ENCODE measurements at regions of chr12 and their contacts with region 1.

Region 1: GRCh38 chr12:20601668-20602280 is 93.4 kb upstream of the SLCO1C1 start:
- DNase-seq: peak; percentile 75
- H3K4me3 ChIP-seq: no peak overlapping the region
- H3K27ac ChIP-seq: no peak overlapping the region
- H3K4me1 ChIP-seq: peaks cover 9% of the 10 kb centered on the region
- H3K27me3 ChIP-seq: no peaks in the 10 kb centered on the region
- CTCF ChIP-seq: peak in 1 of 2 donors; percentile 24
- POLR2A ChIP-seq: no peak

Region 2: GRCh38 chr12:20220339-20220738 is 381.4 kb before region 1 on chr12:
- CTCF ChIA-PET with region 1: interaction called, 10 read pairs
- POLR2A ChIA-PET with region 1: no interaction called
- dilution Hi-C with region 1: no loop called
- intact Hi-C with region 1: no loop called
- DNase-seq: peak; percentile 61
- H3K4me3 ChIP-seq: no peak overlapping the region
- H3K27ac ChIP-seq: no peak overlapping the region
- H3K4me1 ChIP-seq: no peaks in the 10 kb centered on the region
- H3K27me3 ChIP-seq: no peaks in the 10 kb centered on the region
- CTCF ChIP-seq: peak; percentile 26 to 30
- POLR2A ChIP-seq: no peak

Region 3: DNA sequence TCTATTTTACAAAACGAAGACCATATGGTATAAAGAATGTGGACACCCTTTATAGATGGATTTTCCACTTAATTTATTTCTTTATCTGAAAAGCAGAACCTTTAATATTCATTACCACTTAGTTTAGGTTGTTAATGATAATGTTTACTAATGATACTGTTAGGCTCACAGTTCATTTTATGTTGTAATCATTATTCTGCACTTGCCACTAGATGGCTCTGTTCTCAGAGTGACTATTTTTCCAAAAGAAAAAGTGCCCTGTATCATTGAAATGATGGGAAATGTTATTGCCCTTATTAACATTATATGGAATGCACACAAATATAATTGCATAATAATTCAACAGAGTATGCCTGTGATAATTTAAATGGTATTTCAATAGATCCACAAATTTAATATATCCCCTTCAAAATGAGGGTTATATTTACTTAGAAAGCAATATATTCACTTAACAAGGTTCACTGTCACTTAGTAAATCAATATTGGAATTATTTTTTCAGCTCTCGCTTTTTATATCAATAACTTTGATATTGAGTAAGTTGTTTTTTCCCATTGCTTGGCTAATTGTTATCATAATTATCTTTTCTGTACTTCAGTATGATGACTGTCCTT is 137.8 kb before region 1 on chr12:
- CTCF ChIA-PET with region 1: interaction called, 9 read pairs
- POLR2A ChIA-PET with region 1: no interaction called
- dilution Hi-C with region 1: no loop called
- intact Hi-C with region 1: loop called (anchors 2 kb)
- DNase-seq: peak; percentile 44
- H3K4me3 ChIP-seq: no peak overlapping the region
- H3K27ac ChIP-seq: no peak overlapping the region
- H3K4me1 ChIP-seq: no peaks in the 10 kb centered on the region
- H3K27me3 ChIP-seq: no peaks in the 10 kb centered on the region
- CTCF ChIP-seq: peak; percentile 26 to 41
- POLR2A ChIP-seq: no peak

Region 4: GRCh38 chr12:20624718-20625117 is 22.9 kb after region 1 on chr12:
- CTCF ChIA-PET with region 1: interaction called, 13 read pairs
- POLR2A ChIA-PET with region 1: no interaction called
- dilution Hi-C with region 1: no loop called
- intact Hi-C with region 1: no loop called
- DNase-seq: peak; percentile 58
- H3K4me3 ChIP-seq: no peak overlapping the region
- H3K27ac ChIP-seq: no peak overlapping the region
- H3K4me1 ChIP-seq: peaks cover 11% of the 10 kb centered on the region
- H3K27me3 ChIP-seq: no peaks in the 10 kb centered on the region
- CTCF ChIP-seq: peak; percentile 32 to 46
- POLR2A ChIP-seq: no peak

Measured in endothelial cell of umbilical vein (primary cell).